CD4-positive, alpha-beta T cell (primary cell): ENCODE measurements at regions of chr19 and their contacts with region 1.

Region 1: GRCh38 chr19:19404879-19405860 is at the start of gene GATAD2A:
- DNase-seq: peak; percentile 84 to 96 (median 90)
- ATAC-seq: peak; percentile 84
- H3K4me3 ChIP-seq: peak within 1 kb of the TSS; percentile 61
- H3K4me3 Mint-ChIP-seq: peak within 1 kb of the TSS; percentile 96
- H3K27ac ChIP-seq: peak within 1 kb of the TSS; percentile 71 to 72
- H3K27ac Mint-ChIP-seq: peak within 1 kb of the TSS; percentile 90
- H3K4me1 ChIP-seq: peaks cover 46% of the 10 kb centered on the region
- H3K4me1 Mint-ChIP-seq: peaks cover 70% of the 10 kb centered on the region
- H3K27me3 ChIP-seq: no peaks in the 10 kb centered on the region
- H3K27me3 Mint-ChIP-seq: no peaks in the 10 kb centered on the region
- CTCF ChIP-seq: peak; percentile 49
- total RNA-seq, gene GATAD2A: 104 to 107 TPM

Region 2: DNA sequence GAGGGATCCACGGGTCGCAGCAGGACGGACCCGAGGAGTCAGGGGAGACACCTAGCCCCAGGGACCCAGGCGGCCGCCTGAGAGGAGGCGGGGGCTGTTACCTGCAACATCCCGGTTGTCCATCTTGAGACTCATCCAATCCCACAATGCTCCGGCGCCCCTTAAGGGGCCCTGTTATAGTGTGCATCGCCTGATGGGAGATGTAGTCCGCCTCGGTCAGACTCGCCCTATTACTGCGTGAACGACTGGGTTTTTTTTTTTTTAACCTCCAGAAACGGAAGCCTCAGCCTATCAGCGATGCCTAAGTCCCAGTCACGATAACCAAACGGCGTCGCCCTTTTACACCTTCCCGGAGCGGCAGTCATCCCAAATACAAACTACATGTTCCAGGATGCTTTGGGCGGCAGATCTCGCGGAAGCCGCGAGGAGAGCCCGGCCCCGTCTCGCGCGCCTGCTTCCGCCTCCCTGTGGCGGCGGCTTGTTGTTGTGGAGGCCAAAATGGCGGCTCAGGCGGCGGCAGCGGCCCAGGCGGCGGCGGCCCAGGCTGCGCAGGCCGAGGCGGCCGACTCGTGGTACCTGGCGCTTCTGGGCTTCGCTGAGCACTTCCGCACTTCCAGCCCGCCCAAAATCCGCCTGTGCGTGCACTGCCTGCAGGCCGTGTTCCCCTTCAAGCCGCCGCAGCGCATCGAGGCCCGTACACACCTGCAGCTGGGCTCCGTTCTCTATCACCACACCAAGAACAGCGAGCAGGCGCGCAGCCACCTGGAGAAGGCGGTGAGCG is 84.6 kb before region 1 on chr19 and contains the starts of genes MAU2 and SUGP1:
- CTCF ChIA-PET with region 1: no interaction called
- POLR2A ChIA-PET with region 1: interaction called, 5 read pairs
- intact Hi-C with region 1: loop called in 1 of 2 experiments (anchors 5 kb)
- DNase-seq: peak; percentile 81 to 96 (median 88)
- ATAC-seq: peak; percentile 88
- H3K4me3 ChIP-seq: peak within 1 kb of the TSS; percentile 71
- H3K4me3 Mint-ChIP-seq: peak within 1 kb of the TSS; percentile 100
- H3K27ac ChIP-seq: peak within 1 kb of the TSS; percentile 92 to 95
- H3K27ac Mint-ChIP-seq: peak within 1 kb of the TSS; percentile 99
- H3K4me1 ChIP-seq: peaks cover 57% of the 10 kb centered on the region
- H3K4me1 Mint-ChIP-seq: peaks cover 43% of the 10 kb centered on the region
- H3K27me3 ChIP-seq: no peaks in the 10 kb centered on the region
- H3K27me3 Mint-ChIP-seq: no peaks in the 10 kb centered on the region
- CTCF ChIP-seq: peak; percentile 16
- total RNA-seq, gene MAU2: 132 to 133 TPM
- total RNA-seq, gene SUGP1: 49.7 to 56.0 TPM

Region 3: GRCh38 chr19:19366612-19367396 is 38.4 kb before region 1 on chr19:
- CTCF ChIA-PET with region 1: interaction called, 9 read pairs
- POLR2A ChIA-PET with region 1: interaction called, 40 read pairs
- intact Hi-C with region 1: loop called in 1 of 2 experiments (anchors 2 kb)
- DNase-seq: peak; percentile 45 to 87 (median 64)
- ATAC-seq: peak; percentile 56
- H3K4me3 ChIP-seq: no peak overlapping the region
- H3K4me3 Mint-ChIP-seq: peak overlapping the region; percentile 49
- H3K27ac ChIP-seq: no peak overlapping the region
- H3K27ac Mint-ChIP-seq: peak overlapping the region; percentile 76
- H3K4me1 ChIP-seq: peaks cover 33% of the 10 kb centered on the region
- H3K4me1 Mint-ChIP-seq: peaks cover 21% of the 10 kb centered on the region
- H3K27me3 ChIP-seq: no peaks in the 10 kb centered on the region
- H3K27me3 Mint-ChIP-seq: no peaks in the 10 kb centered on the region
- CTCF ChIP-seq: peak; percentile 91

Region 4: DNA sequence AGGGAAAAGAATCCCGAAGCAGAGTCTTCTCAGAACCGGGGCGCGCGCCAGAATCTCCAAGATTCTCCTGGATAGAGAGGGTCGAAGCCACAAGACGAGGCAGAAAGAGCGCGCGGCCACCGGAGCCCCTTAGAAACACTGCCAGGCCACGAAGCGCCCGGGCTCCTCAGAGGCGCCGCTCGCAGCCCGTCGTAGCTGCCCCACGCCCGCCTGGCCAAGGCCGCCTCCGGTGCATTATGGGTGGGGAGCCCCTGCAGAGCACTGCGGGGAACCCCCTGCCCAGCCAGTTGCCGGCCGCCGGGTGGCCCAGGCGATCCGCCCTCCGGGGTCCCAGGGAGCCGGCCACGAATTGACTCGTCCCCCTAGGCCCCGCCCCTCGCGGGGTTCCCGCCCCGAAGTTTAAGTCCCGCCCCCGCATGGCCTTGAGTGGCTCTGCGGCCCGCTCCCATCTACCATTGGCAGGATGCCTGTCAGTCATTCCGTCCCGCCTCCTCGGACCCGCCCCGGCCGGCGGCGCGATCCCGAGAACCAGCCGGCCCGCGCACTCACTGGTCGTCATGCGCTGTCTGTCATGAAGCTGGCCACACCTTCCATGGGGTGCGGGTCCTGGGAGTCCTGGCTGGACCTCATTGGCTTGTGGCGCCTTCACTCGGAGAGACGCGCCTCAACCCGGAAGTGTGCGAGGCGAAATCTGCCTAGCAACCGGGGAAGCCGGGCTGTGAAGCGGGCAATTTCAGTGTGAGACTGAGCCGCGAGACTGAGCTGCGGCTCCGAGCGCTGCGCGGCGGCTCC is 19.9 kb before region 1 on chr19:
- CTCF ChIA-PET with region 1: interaction called, 7 read pairs
- POLR2A ChIA-PET with region 1: interaction called, 44 read pairs
- intact Hi-C with region 1: loop called (anchors 1 kb)
- DNase-seq: peak; percentile 97 to 100 (median 99)
- ATAC-seq: peak; percentile 89
- H3K4me3 ChIP-seq: peak overlapping the region; percentile 92
- H3K4me3 Mint-ChIP-seq: peak overlapping the region; percentile 99
- H3K27ac ChIP-seq: peak overlapping the region; percentile 64 to 77
- H3K27ac Mint-ChIP-seq: peak overlapping the region; percentile 94
- H3K4me1 ChIP-seq: peaks cover 52% of the 10 kb centered on the region
- H3K4me1 Mint-ChIP-seq: peaks cover 44% of the 10 kb centered on the region
- H3K27me3 ChIP-seq: no peaks in the 10 kb centered on the region
- H3K27me3 Mint-ChIP-seq: no peaks in the 10 kb centered on the region
- CTCF ChIP-seq: no peak

Region 5: GRCh38 chr19:19444681-19445155 is 39.5 kb after region 1 on chr19:
- CTCF ChIA-PET with region 1: interaction called, 6 read pairs
- POLR2A ChIA-PET with region 1: interaction called, 10 read pairs
- intact Hi-C with region 1: loop called in 1 of 2 experiments (anchors 5 kb)
- DNase-seq: peak in 3 of 14 experiments; percentile 40 to 63 (median 49)
- ATAC-seq: no peak
- H3K4me3 ChIP-seq: no peak overlapping the region
- H3K4me3 Mint-ChIP-seq: peak overlapping the region; percentile 42
- H3K27ac ChIP-seq: peak overlapping the region in 1 of 2 donors; percentile 73
- H3K27ac Mint-ChIP-seq: peak overlapping the region; percentile 73
- H3K4me1 ChIP-seq: peaks cover 70% of the 10 kb centered on the region
- H3K4me1 Mint-ChIP-seq: peaks cover 66% of the 10 kb centered on the region
- H3K27me3 ChIP-seq: no peaks in the 10 kb centered on the region
- H3K27me3 Mint-ChIP-seq: no peaks in the 10 kb centered on the region
- CTCF ChIP-seq: no peak

Region 6: GRCh38 chr19:19477728-19478383 is 72.7 kb after region 1 on chr19:
- CTCF ChIA-PET with region 1: no interaction called
- POLR2A ChIA-PET with region 1: no interaction called
- intact Hi-C with region 1: no loop called
- DNase-seq: no peak
- ATAC-seq: no peak
- H3K4me3 ChIP-seq: no peak overlapping the region
- H3K4me3 Mint-ChIP-seq: no peak overlapping the region
- H3K27ac ChIP-seq: no peak overlapping the region
- H3K27ac Mint-ChIP-seq: peak overlapping the region; percentile 78
- H3K4me1 ChIP-seq: peaks cover 80% of the 10 kb centered on the region
- H3K4me1 Mint-ChIP-seq: peaks cover 80% of the 10 kb centered on the region
- H3K27me3 ChIP-seq: no peaks in the 10 kb centered on the region
- H3K27me3 Mint-ChIP-seq: no peaks in the 10 kb centered on the region
- CTCF ChIP-seq: no peak

Region 7: GRCh38 chr19:19488875-19489690 is 83.9 kb after region 1 on chr19:
- CTCF ChIA-PET with region 1: interaction called, 34 read pairs
- POLR2A ChIA-PET with region 1: interaction called, 79 read pairs
- intact Hi-C with region 1: loop called (anchors 1 to 2 kb)
- DNase-seq: peak; percentile 78 to 99 (median 87)
- ATAC-seq: peak; percentile 89
- H3K4me3 ChIP-seq: peak overlapping the region; percentile 11
- H3K4me3 Mint-ChIP-seq: peak overlapping the region; percentile 32
- H3K27ac ChIP-seq: peak overlapping the region; percentile 86 to 96
- H3K27ac Mint-ChIP-seq: peak overlapping the region; percentile 99
- H3K4me1 ChIP-seq: peaks cover 64% of the 10 kb centered on the region
- H3K4me1 Mint-ChIP-seq: peaks cover 55% of the 10 kb centered on the region
- H3K27me3 ChIP-seq: no peaks in the 10 kb centered on the region
- H3K27me3 Mint-ChIP-seq: no peaks in the 10 kb centered on the region
- CTCF ChIP-seq: no peak

Region 8: GRCh38 chr19:19900729-19901444 is 495.7 kb after region 1 on chr19 and contains the start of gene ZNF93:
- CTCF ChIA-PET with region 1: no interaction called
- POLR2A ChIA-PET with region 1: interaction called, 10 read pairs
- intact Hi-C with region 1: no loop called
- DNase-seq: peak; percentile 80 to 96 (median 85)
- ATAC-seq: peak; percentile 97
- H3K4me3 ChIP-seq: peak within 1 kb of the TSS; percentile 96
- H3K4me3 Mint-ChIP-seq: peak within 1 kb of the TSS; percentile 94
- H3K27ac ChIP-seq: peak within 1 kb of the TSS; percentile 70
- H3K27ac Mint-ChIP-seq: peak within 1 kb of the TSS; percentile 82
- H3K4me1 ChIP-seq: peaks cover 20% of the 10 kb centered on the region
- H3K4me1 Mint-ChIP-seq: peaks cover 47% of the 10 kb centered on the region
- H3K27me3 ChIP-seq: no peaks in the 10 kb centered on the region
- H3K27me3 Mint-ChIP-seq: no peaks in the 10 kb centered on the region
- CTCF ChIP-seq: no peak
- total RNA-seq, gene ZNF93: 4.4 to 5.4 TPM